ENCODE measurements at regions of chr18 and their contacts with region 1.

Region 1: DNA sequence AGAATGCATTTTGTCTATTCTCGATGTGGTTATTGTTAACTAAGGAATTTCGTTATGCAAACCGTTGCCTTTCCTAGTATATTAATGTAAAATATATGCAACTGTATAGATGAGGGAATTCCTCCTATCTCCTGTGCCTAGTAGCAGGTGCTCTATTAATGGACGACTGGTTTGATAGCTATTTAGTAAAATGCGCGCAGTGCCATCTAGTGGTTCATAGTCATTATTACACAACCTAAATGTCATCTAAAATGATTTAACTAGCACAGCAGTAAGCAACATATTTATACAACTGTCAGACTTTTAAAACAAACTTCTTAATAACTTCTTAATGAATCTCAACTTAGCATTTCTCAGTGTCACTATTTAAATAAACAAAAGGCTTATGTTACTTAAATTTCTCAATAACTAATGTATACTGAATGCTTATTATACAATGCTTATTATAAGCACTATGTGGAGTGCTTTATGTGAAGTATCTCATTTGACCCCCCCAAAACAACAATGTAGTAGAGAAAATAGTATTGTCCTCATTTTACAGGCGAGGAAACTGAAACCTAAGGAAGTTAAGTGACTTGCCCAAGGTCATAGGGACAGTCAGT is 77.9 kb downstream of the DTNA start:
- DNase-seq: no peak
- H3K4me3 ChIP-seq: no peak overlapping the region
- H3K27ac ChIP-seq: no peak overlapping the region
- H3K4me1 ChIP-seq: no peaks in the 10 kb centered on the region
- H3K27me3 ChIP-seq: no peaks in the 10 kb centered on the region
- CTCF ChIP-seq: peak; percentile 48 to 71 (median 68)

Region 2: DNA sequence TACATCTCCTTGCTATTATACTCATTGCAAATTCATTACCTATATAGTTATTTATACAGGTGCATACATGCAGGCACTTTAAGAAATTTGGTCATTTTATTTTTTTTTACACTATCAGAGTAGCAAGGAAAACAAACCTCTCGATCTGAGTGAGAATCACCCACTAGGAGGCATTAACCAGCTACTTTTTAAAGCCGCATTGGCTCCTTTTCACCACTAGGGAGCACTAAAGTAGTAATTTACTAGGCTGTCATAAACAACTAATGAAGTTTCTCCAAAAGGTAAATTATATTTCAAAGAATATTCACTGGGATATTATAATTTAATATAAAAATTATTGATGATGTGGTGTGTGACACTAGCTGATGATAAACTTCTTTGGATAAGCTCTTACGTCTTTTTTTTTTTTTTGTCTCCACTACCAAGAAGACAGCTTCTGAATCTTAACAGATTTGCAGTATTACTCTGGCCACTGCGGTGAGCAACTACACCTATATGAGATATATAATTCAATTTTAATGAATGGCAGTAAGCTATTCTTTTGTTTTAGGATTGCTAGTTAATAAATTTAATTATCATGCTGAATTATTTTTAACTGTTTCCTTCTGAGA is 665.2 kb before region 1 on chr18:
- intact Hi-C with region 1: loop called (anchors 2 kb)
- DNase-seq: no peak
- H3K4me3 ChIP-seq: no peak overlapping the region
- H3K27ac ChIP-seq: no peak overlapping the region
- H3K4me1 ChIP-seq: no peaks in the 10 kb centered on the region
- H3K27me3 ChIP-seq: no peaks in the 10 kb centered on the region
- CTCF ChIP-seq: peak; percentile 16 to 78 (median 75)

Region 3: GRCh38 chr18:34224423-34225217 is 563.4 kb before region 1 on chr18 and contains the start of gene NOL4:
- intact Hi-C with region 1: loop called (anchors 10 kb)
- DNase-seq: peak in 1 of 2 donors; percentile 72
- H3K4me3 ChIP-seq: peak within 1 kb of the TSS; percentile 54 to 69
- H3K27ac ChIP-seq: no peak within 1 kb of the TSS
- H3K4me1 ChIP-seq: peaks cover 3% of the 10 kb centered on the region in 2 donors
- H3K27me3 ChIP-seq: no peaks in the 10 kb centered on the region
- CTCF ChIP-seq: peak in 2 of 3 experiments; percentile 15 to 37
- total RNA-seq, gene NOL4: not detected

Region 4: GRCh38 chr18:34592961-34593382 is 195.1 kb before region 1 on chr18:
- intact Hi-C with region 1: loop called (anchors 2 kb)
- DNase-seq: peak in 1 of 2 donors; percentile 78
- H3K4me3 ChIP-seq: peak overlapping the region; percentile 42 to 67
- H3K27ac ChIP-seq: peak overlapping the region; percentile 67 to 76
- H3K4me1 ChIP-seq: peaks cover 0 to 13% of the 10 kb centered on the region in 2 donors
- H3K27me3 ChIP-seq: no peaks in the 10 kb centered on the region
- CTCF ChIP-seq: no peak